Caco-2 (cell line): ENCODE measurements at regions of chr2 and their contacts with region 1.

Region 1: GRCh38 chr2:229273723-229274338 is 2.7 kb upstream of the PID1 start:
- DNase-seq: peak; percentile 75 to 81
- H3K4me3 ChIP-seq: peak overlapping the region; percentile 23
- H3K4me3 Mint-ChIP-seq: peak overlapping the region; percentile 59
- H3K27ac Mint-ChIP-seq: peak overlapping the region; percentile 32
- H3K4me1 ChIP-seq: peaks cover 14% of the 10 kb centered on the region
- H3K4me1 Mint-ChIP-seq: peaks cover 13% of the 10 kb centered on the region
- H3K27me3 ChIP-seq: no peaks in the 10 kb centered on the region
- H3K27me3 Mint-ChIP-seq: no peaks in the 10 kb centered on the region
- CTCF ChIP-seq: peak; percentile 65 to 67

Region 2: GRCh38 chr2:228681426-228681825 is 592.4 kb before region 1 on chr2:
- CTCF ChIA-PET with region 1: no interaction called
- POLR2A ChIA-PET with region 1: no interaction called
- intact Hi-C with region 1: loop called (anchors 1 kb)
- DNase-seq: no peak
- H3K4me3 ChIP-seq: no peak overlapping the region
- H3K4me3 Mint-ChIP-seq: no peak overlapping the region
- H3K27ac Mint-ChIP-seq: no peak overlapping the region
- H3K4me1 ChIP-seq: no peaks in the 10 kb centered on the region
- H3K4me1 Mint-ChIP-seq: no peaks in the 10 kb centered on the region
- H3K27me3 ChIP-seq: no peaks in the 10 kb centered on the region
- H3K27me3 Mint-ChIP-seq: no peaks in the 10 kb centered on the region
- CTCF ChIP-seq: peak in 1 of 2 experiments; percentile 13

Region 3: GRCh38 chr2:229090225-229090624 is 183.6 kb before region 1 on chr2:
- CTCF ChIA-PET with region 1: no interaction called
- POLR2A ChIA-PET with region 1: interaction called, 18 read pairs
- intact Hi-C with region 1: no loop called
- DNase-seq: no peak
- H3K4me3 ChIP-seq: no peak overlapping the region
- H3K4me3 Mint-ChIP-seq: no peak overlapping the region
- H3K27ac Mint-ChIP-seq: no peak overlapping the region
- H3K4me1 ChIP-seq: peaks cover 22% of the 10 kb centered on the region
- H3K4me1 Mint-ChIP-seq: peaks cover 21% of the 10 kb centered on the region
- H3K27me3 ChIP-seq: no peaks in the 10 kb centered on the region
- H3K27me3 Mint-ChIP-seq: no peaks in the 10 kb centered on the region
- CTCF ChIP-seq: no peak

Region 4: GRCh38 chr2:229160180-229160579 is 113.7 kb before region 1 on chr2:
- CTCF ChIA-PET with region 1: interaction called, 6 read pairs
- POLR2A ChIA-PET with region 1: interaction called, 7 read pairs
- intact Hi-C with region 1: loop called (anchors 1 kb)
- DNase-seq: peak; percentile 74 to 81
- H3K4me3 ChIP-seq: no peak overlapping the region
- H3K4me3 Mint-ChIP-seq: peak overlapping the region; percentile 65
- H3K27ac Mint-ChIP-seq: peak overlapping the region; percentile 93
- H3K4me1 ChIP-seq: peaks cover 29% of the 10 kb centered on the region
- H3K4me1 Mint-ChIP-seq: peaks cover 25% of the 10 kb centered on the region
- H3K27me3 ChIP-seq: no peaks in the 10 kb centered on the region
- H3K27me3 Mint-ChIP-seq: no peaks in the 10 kb centered on the region
- CTCF ChIP-seq: no peak

Region 5: GRCh38 chr2:229408356-229408755 is 134.5 kb after region 1 on chr2:
- CTCF ChIA-PET with region 1: no interaction called
- POLR2A ChIA-PET with region 1: no interaction called
- intact Hi-C with region 1: loop called (anchors 5 kb)
- DNase-seq: peak; percentile 58 to 65
- H3K4me3 ChIP-seq: no peak overlapping the region
- H3K4me3 Mint-ChIP-seq: no peak overlapping the region
- H3K27ac Mint-ChIP-seq: peak overlapping the region; percentile 80
- H3K4me1 ChIP-seq: peaks cover 8% of the 10 kb centered on the region
- H3K4me1 Mint-ChIP-seq: peaks cover 14% of the 10 kb centered on the region
- H3K27me3 ChIP-seq: no peaks in the 10 kb centered on the region
- H3K27me3 Mint-ChIP-seq: no peaks in the 10 kb centered on the region
- CTCF ChIP-seq: no peak

Region 6: DNA sequence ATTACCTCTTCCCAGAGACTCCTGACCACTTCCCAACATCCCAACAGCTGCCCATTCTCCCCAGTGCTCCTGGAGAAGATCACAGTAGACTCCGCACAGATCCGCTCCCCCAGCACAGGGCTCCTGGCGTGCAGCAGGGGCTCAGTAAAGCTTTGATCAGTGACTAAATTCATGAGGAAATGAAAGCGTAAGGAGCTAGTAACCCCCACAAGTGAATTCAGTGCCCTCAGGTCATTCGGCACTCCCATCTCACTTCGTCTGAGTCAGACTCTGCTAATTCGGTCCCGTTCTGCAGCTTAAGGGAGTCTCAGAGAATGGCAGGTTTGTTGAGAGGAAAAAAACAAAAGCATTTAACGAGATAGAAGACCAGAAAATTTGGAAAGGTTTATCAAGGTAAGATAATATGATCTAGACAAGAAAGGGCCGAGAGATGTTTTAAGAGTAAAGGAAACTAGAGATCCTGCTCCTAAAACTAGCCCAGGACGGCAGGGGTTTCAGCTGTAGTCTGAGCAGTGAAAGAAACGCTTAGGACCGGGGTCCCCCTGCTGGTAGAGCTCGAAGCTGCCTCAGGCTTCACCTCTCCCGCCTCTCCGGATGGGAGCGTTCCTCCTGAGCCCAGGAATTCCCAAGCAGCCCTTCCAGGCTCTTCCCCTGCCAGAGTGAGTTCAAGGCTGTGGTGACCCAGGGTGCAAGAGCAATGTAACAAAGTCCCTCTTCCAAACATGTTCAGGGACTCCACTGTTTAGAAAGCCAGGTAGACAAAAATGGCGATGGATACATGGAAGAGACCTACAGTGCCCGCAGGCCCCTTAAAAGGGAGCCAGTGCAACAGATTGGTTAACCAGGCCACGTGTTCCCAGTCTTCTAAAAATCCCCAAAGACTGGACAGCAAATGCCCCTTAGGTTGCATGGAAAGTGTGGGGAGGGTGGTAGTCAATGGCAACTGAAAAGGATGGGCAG is 313.2 kb after region 1 on chr2:
- CTCF ChIA-PET with region 1: no interaction called
- POLR2A ChIA-PET with region 1: no interaction called
- intact Hi-C with region 1: no loop called
- DNase-seq: peak; percentile 61 to 74
- H3K4me3 ChIP-seq: no peak overlapping the region
- H3K4me3 Mint-ChIP-seq: no peak overlapping the region
- H3K27ac Mint-ChIP-seq: no peak overlapping the region
- H3K4me1 ChIP-seq: no peaks in the 10 kb centered on the region
- H3K4me1 Mint-ChIP-seq: no peaks in the 10 kb centered on the region
- H3K27me3 ChIP-seq: no peaks in the 10 kb centered on the region
- H3K27me3 Mint-ChIP-seq: peaks cover 5% of the 10 kb centered on the region
- CTCF ChIP-seq: peak; percentile 78 to 83